ENCODE measurements at regions of chr19 and their contacts with region 1.

Region 1: DNA sequence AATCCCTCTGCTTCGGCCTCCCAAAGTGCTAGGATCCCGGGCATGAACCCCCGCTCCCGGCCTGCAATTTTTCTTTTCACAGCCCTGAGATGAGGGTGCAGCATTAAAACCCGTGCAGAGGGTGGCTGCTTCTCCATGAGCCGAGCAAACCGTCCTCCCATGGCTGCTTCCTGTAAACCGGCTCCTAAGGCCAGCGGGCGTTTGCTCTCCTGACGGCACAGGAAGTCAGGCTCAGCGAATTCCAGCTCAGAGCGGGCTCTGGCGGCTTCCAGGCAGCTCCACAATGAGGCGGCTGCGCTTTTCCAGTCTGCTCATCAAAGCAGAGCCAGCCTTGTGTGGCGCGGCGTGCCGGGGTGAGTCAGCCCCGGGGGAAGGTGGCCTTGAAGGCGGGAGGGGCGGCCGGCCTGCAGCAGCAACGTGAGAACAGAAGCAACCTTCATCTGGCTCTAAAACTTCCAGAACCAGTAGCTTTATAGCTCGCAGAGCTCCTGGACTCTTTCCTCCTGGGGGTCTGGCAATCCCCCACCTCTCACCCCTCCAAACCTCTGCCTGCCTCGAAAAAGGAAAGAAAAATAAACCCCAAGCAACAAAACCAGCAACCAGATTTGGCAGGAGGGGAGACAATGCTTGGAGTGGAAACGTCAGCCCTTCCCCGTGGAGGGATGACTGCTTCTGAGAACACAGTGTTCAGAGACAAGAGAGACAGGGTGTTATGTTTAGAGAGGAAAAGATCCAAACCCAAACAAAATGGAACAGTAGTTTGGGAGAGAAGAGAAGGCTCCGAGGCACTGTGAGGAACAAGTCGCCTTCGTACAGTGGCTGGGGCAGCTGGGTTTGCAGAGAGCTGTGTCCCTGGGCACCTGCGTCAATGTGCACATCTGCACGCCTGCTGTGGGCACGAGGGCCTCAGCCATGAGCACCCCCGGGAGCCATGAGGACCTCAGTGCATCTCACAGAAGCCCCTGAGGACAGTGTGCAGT is 67.8 kb downstream of the GADD45B start:
- H3K4me3 ChIP-seq: no peak overlapping the region; the same call in 1 of the 2 replicates
- H3K27ac ChIP-seq: peak overlapping the region; percentile 64
- H3K4me1 ChIP-seq: peaks cover 7% of the 10 kb centered on the region; the same call in 1 of the 2 replicates
- CTCF ChIP-seq: no peak

Region 2: GRCh38 chr19:2399582-2399981 is 144.2 kb before region 1 on chr19:
- CTCF ChIA-PET with region 1: interaction called, 12 read pairs
- POLR2A ChIA-PET with region 1: no interaction called
- H3K4me3 ChIP-seq: no peak overlapping the region
- H3K27ac ChIP-seq: no peak overlapping the region
- H3K4me1 ChIP-seq: no peaks in the 10 kb centered on the region
- CTCF ChIP-seq: no peak

Region 3: DNA sequence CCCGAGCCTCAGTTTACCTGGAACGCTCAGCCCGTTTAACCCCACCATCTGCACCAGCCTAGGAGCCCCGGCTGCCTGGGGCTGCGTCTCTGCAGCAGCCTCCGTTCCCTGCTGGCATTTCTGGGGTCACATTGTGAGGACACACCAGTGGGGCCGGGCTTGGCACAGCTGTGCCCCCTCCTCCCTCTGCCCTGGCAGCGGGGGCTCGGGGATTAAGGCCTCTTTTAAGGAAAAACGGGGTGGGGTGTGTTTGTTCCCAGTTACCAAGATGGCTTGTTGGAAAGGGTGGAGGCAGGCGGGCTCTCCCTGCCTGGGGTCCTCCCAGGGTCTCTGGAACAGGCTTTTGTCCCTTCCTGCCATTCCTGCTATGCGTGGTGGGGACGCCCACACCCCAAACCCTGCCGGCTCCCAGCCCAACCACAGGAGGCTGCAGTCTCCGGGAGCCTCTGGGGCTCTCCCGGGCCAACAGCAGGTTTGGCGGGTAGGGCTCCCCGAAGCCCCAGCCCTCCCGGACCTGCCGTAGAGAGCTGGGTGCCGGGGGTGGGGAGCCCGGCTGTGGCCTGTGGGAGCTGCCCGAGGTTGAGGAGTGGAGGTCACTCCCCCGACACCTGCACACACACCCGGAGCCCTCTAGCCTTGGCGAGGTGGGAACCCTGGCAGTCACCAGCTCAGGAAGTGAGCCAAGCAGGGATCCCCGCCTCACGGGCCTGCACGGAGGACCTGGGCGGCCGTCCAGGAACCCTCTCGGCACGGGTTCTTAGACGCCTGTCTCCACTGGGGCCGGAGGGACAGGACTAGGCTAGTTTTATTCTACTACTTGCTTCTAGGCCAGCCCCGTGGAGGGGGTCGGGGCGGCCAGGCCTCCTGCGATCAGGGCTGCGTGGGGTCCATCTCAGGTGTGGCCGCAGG is 31.0 kb before region 1 on chr19:
- CTCF ChIA-PET with region 1: no interaction called
- POLR2A ChIA-PET with region 1: no interaction called
- H3K4me3 ChIP-seq: no peak overlapping the region
- H3K27ac ChIP-seq: no peak overlapping the region
- H3K4me1 ChIP-seq: no peaks in the 10 kb centered on the region
- CTCF ChIP-seq: no peak

Region 4: GRCh38 chr19:2524838-2525723 is 18.7 kb before region 1 on chr19:
- CTCF ChIA-PET with region 1: interaction called, 3 read pairs
- POLR2A ChIA-PET with region 1: interaction called, 26 read pairs
- H3K4me3 ChIP-seq: peak overlapping the region; percentile 23
- H3K27ac ChIP-seq: no peak overlapping the region; the same call in 1 of the 2 replicates
- H3K4me1 ChIP-seq: 0 out of 2 replicates have a peak, but pooled peaks cover 4% of the 10 kb centered on the region
- CTCF ChIP-seq: no peak; the same call in 1 of the 2 replicates

Region 5: DNA sequence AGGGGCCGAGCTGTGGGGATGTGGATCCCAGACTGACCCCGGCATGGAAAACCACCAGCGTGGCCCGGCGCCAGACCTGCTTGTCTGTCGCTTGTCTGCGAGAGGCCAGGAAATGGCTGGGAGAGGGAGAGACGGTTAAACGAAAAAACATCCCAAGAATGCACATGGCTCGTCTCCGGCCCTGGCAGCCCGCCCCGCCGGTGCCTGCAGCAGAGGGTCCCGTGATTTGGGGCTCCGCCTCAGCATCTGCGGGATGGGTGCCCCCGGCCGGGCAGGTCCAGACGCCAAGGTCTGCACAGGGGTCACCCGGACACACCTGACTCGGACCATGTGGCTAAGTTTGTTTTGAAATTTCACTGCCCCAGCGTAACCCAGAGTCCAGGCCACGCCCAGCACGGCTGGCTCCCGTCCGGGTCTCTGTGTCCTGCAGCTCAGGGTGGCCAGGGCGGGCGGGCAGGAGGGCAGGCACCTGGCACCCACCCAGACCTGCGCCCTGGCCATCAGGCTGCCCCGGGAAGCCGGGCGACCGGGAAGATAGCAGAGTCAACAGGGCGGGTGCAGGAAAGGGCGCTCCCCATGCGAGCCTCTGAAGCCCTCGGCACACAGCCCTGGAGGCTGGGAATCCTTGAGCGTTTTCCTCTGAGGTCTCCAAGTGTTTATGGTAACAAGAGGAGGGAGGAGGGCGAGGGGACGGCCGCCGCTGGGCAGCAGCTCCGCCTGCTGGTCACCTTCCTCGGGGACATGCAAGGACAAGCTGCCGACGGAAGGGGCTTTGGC is 35.3 kb after region 1 on chr19:
- CTCF ChIA-PET with region 1: interaction called, 8 read pairs
- POLR2A ChIA-PET with region 1: interaction called, 14 read pairs
- H3K4me3 ChIP-seq: peak overlapping the region; percentile 51
- H3K27ac ChIP-seq: peak overlapping the region; percentile 44; the same call in 1 of the 2 replicates
- H3K4me1 ChIP-seq: no peaks in the 10 kb centered on the region
- CTCF ChIP-seq: peak; percentile 96

Measured in HEK293 (cell line).